Mammary epithelial cell (primary cell): ENCODE measurements at regions of chr11 and their contacts with region 1.

Region 1: GRCh38 chr11:65274735-65275682 is 13.2 kb downstream of the POLA2 start:
- DNase-seq: peak; percentile 74
- H3K4me3 ChIP-seq: no peak overlapping the region
- H3K27ac ChIP-seq: peak overlapping the region; percentile 6
- H3K4me1 ChIP-seq: peaks cover 38% of the 10 kb centered on the region
- H3K27me3 ChIP-seq: no peaks in the 10 kb centered on the region
- CTCF ChIP-seq: peak; percentile 63 to 77

Region 2: DNA sequence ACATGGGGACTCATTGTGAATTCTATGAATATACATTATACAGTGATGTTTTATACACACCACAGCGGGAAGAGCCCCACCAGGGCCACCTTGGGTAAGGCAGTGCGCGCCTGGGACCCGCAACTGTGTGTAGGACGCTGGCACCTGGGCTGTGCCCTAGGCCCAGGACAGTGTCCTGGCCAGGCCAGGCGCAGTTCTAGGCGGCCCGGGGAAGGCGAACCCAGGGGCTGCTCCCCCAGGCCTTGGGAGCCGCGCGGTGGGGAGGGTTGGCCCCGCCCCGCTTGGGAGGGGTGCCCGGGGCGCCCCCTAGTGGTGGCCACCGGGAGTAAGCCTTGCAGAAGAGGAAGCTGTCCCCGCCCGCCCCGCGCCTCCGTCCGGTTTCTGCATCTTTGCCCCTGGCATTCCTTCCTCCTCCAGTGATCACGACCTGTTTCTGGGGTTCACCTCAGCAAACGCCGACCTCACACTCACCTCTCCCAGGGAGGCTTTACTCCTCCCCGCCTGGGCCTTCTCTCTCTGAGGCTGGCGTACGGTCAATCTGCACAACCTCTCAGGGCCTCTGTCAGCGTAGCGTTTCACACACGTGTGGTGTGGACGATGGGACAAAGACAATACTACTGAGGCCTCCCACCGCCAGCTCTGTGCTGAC is 387.1 kb before region 1 on chr11:
- CTCF ChIA-PET with region 1: interaction called, 21 read pairs
- dilution Hi-C with region 1: no loop called
- in situ Hi-C with region 1: no loop called
- intact Hi-C with region 1: no loop called
- DNase-seq: peak; percentile 49
- H3K4me3 ChIP-seq: peak overlapping the region in 1 of 3 experiments; percentile 19
- H3K27ac ChIP-seq: no peak overlapping the region
- H3K4me1 ChIP-seq: peaks cover 8% of the 10 kb centered on the region
- H3K27me3 ChIP-seq: no peaks in the 10 kb centered on the region
- CTCF ChIP-seq: peak; percentile 61 to 94

Region 3: DNA sequence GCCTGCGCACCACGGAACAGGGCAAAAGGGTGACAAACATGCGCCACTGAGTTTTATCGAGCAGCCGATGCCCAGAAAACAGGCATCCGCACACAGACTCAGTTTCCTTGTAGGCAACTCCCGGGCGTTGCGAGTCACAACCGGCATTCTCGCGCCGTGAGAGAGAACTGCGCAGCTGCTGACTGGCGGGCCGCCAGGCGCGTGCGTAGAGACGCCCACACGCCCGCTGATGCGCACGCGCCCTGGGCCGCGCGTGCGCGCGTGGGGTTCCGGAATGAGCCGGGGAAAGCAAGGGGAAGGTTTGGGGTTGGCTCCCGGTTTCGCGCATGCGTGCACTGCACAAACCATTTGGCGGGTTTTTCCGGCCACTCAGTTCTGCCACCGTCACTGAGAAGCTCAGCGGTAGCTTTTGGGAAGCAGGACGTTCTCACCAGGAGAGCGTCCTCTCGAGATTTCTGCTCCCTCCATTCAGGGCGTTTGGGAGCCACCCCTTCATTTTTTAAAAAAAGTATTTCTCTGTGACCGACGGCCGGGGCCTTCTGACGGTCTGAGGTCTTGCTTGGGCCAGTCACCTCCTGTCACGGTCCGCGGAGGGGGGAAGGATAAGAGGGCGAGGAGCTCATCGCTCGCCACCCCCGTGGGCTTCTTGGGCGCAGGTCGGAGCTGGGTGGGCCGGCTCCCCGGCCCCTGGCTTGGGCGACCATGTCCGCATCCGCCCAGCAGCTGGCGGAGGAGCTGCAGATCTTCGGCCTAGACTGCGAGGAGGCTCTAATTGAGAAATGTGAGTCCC is 13.2 kb before region 1 on chr11 and contains the start of gene POLA2:
- CTCF ChIA-PET with region 1: interaction called, 39 read pairs
- dilution Hi-C with region 1: no loop called
- in situ Hi-C with region 1: no loop called
- intact Hi-C with region 1: no loop called
- DNase-seq: peak; percentile 96
- H3K4me3 ChIP-seq: peak within 1 kb of the TSS; percentile 61 to 88 (median 80)
- H3K27ac ChIP-seq: peak within 1 kb of the TSS; percentile 82
- H3K4me1 ChIP-seq: peaks cover 13% of the 10 kb centered on the region
- H3K27me3 ChIP-seq: no peaks in the 10 kb centered on the region
- CTCF ChIP-seq: no peak
- total RNA-seq, gene POLA2: 7.7 to 21.8 TPM

Region 4: DNA sequence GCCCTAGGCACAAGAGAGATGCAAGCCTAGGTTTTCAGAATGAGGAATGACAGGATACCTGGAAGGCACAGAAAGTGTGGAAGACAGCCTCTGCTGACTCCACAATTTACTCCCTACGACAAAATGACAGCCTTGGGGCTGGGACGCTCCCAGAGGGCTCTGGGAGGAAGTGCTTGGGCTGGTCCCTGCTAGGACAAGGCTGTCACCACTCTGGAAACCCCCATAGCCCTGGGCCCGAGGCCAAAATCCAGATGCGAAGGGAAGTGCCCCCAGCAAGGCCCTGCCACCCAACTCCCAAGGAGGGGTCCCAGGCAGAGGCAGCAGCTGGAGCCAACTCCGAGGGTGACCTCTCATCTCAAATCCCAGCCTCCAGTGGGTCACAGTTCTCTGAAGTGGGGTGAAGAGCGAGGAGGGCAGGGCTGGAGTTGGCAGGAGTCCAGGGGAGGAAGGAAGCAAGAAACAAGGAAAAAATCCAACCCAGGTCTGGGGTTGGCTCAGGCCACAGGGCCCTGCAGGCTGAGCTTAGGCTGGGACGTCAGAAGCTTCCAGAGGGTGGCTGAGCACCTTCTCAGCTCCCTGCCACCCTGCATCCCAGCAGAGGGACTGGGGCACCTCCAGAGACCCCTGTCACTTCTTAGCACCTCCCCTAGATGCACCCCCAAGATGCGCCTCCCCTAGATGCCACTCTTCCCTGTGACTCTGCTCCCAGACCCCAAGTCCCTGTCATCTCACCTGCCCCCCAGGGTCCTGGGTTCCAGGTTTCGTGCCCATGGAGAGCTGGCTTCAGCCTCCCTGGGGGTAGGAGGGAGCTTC is 33.5 kb after region 1 on chr11:
- CTCF ChIA-PET with region 1: interaction called, 14 read pairs
- dilution Hi-C with region 1: no loop called
- in situ Hi-C with region 1: no loop called
- intact Hi-C with region 1: no loop called
- DNase-seq: no peak
- H3K4me3 ChIP-seq: no peak overlapping the region
- H3K27ac ChIP-seq: no peak overlapping the region
- H3K4me1 ChIP-seq: no peaks in the 10 kb centered on the region
- H3K27me3 ChIP-seq: no peaks in the 10 kb centered on the region
- CTCF ChIP-seq: no peak

Region 5: DNA sequence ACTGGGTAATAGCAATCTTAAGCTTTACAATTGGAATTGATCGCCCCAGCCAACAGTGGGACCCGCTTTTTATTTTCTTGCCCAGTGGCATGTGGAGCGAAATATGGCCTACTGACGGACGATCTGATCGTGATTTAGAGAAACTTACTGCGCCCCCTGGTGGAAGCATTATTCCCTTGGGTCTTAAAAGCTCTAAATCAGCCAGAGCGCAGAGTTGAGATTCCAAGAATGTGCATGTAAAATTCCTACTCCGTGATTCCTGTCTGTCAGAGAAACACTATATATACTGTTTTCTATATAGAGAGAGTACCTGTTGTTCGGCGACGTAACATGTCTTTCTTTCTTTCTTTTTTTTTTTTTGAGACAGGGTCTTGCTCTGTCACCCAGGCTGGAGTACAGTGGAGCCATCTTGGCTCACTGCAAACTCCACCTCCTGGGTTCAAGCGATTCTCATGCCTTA is 55.0 kb after region 1 on chr11:
- CTCF ChIA-PET with region 1: interaction called, 21 read pairs
- dilution Hi-C with region 1: no loop called
- in situ Hi-C with region 1: loop called in 1 of 2 experiments (anchors 5 kb)
- intact Hi-C with region 1: loop called (anchors 1 kb)
- DNase-seq: peak; percentile 64
- H3K4me3 ChIP-seq: no peak overlapping the region
- H3K27ac ChIP-seq: peak overlapping the region; percentile 24
- H3K4me1 ChIP-seq: peaks cover 11% of the 10 kb centered on the region
- H3K27me3 ChIP-seq: no peaks in the 10 kb centered on the region
- CTCF ChIP-seq: peak; percentile 70 to 79

Region 6: DNA sequence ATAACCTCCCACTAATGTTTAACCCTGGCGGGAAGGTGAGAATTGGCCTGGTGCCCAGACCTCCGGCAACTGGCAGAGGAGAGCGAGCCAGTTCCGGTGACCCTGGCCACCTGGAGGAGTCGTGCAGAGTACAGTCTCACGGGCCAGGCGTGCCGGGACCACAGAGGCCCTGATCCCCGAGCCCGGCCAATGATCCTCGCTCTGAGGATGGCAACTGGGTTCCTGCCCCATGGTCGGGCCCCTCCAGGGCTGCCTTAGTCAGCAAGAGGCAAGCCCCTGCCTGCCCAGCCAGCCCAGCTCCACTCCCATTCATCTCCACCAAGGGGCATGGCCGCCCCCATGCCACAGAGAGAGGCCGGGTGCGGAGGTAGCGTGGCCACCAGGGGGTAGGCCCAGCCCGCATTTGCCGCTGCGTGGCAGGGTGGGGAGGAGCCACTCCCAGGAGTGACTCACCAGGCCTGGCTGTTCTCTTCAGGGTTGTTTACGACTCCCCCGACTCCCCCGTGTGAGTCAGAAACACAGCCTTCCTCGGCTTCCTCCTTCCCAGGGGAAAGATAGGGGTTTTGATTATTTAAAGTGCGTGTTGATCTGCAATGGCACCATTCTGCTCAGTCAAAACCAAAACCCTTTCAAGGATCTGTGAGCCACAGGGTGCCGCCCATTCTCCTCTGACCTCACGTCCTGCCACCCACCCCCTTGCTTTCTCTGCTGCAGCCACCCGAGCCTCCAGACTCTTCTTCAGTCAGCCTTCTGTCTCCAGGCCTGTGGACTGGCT is 107.2 kb after region 1 on chr11 and contains the start of gene SLC25A45:
- CTCF ChIA-PET with region 1: no interaction called
- dilution Hi-C with region 1: loop called (anchors 5 kb)
- in situ Hi-C with region 1: no loop called
- intact Hi-C with region 1: no loop called
- DNase-seq: peak; percentile 100
- H3K4me3 ChIP-seq: peak within 1 kb of the TSS; percentile 17 to 31 (median 22)
- H3K27ac ChIP-seq: peak within 1 kb of the TSS; percentile 94
- H3K4me1 ChIP-seq: peaks cover 47% of the 10 kb centered on the region
- H3K27me3 ChIP-seq: no peaks in the 10 kb centered on the region
- CTCF ChIP-seq: peak; percentile 55 to 87
- total RNA-seq, gene SLC25A45: 0.50 to 2.4 TPM

Region 7: GRCh38 chr11:65459552-65459951 is 184.5 kb after region 1 on chr11:
- CTCF ChIA-PET with region 1: no interaction called
- dilution Hi-C with region 1: no loop called
- in situ Hi-C with region 1: no loop called
- intact Hi-C with region 1: no loop called
- DNase-seq: no peak
- H3K4me3 ChIP-seq: no peak overlapping the region
- H3K27ac ChIP-seq: no peak overlapping the region
- H3K4me1 ChIP-seq: peaks cover 9% of the 10 kb centered on the region
- H3K27me3 ChIP-seq: no peaks in the 10 kb centered on the region
- CTCF ChIP-seq: no peak